ENCODE measurements at regions of chr4 and their contacts with region 1.

Region 1: DNA sequence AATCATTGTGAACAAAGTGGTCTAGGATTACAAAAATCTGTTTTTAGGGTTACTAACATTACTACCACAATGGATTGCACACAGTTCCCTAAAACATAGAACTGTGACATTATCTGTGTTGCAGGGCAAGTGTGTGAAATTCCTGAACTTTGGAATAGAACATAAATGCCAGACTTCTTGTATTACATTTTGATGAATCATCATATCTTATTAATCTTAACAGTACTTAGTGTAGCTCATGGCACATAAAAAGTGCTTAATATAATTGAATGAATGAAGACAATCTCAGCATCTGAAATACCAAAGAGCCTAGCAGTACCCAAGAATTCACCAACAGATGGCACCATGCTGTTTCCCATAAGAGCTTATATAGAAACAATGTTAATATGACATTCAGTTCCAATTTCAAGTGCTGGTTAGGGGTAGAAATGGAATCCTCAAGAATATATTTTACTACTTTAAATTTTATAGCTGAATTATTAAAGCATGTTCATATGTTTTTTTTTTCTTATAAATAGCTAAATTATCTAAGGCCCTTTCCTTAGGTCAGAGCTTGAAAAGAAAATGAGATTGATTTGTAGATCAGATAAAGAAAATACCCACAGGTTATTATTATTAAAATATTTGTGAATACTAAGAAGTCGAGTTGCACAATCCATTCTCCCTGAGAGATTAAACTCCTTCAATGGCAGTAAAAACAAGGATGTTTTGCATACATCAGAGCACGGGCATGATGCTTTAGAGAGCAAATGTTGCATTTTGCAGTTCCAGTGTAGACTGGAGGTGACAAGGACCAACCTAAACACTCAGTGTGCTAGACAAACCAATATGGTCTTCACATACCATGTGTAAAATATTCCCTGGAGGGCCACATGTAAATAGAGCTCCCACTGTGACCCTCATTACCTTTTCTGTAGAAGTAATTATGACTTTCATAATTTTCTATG is 25.7 kb upstream of the SHISA3 start:
- DNase-seq: no peak
- ATAC-seq: no peak
- H3K4me3 Mint-ChIP-seq: no peak overlapping the region
- H3K27ac Mint-ChIP-seq: no peak overlapping the region
- H3K4me1 Mint-ChIP-seq: no peaks in the 10 kb centered on the region
- H3K27me3 Mint-ChIP-seq: peaks cover 6% of the 10 kb centered on the region
- CTCF ChIP-seq: no peak

Region 2: GRCh38 chr4:42282081-42282901 is 89.3 kb before region 1 on chr4:
- CTCF ChIA-PET with region 1: no interaction called
- POLR2A ChIA-PET with region 1: no interaction called
- intact Hi-C with region 1: no loop called
- DNase-seq: no peak
- ATAC-seq: peak; percentile 50
- H3K4me3 Mint-ChIP-seq: peak overlapping the region; percentile 3
- H3K27ac Mint-ChIP-seq: no peak overlapping the region
- H3K4me1 Mint-ChIP-seq: peaks cover 16% of the 10 kb centered on the region
- H3K27me3 Mint-ChIP-seq: peaks cover 15% of the 10 kb centered on the region
- CTCF ChIP-seq: no peak

Region 3: GRCh38 chr4:42519803-42520417 is 148.3 kb after region 1 on chr4:
- CTCF ChIA-PET with region 1: interaction called, 39 read pairs
- POLR2A ChIA-PET with region 1: no interaction called
- intact Hi-C with region 1: loop called (anchors 1 kb)
- DNase-seq: no peak
- ATAC-seq: peak; percentile 42
- H3K4me3 Mint-ChIP-seq: no peak overlapping the region
- H3K27ac Mint-ChIP-seq: no peak overlapping the region
- H3K4me1 Mint-ChIP-seq: peaks cover 6% of the 10 kb centered on the region
- H3K27me3 Mint-ChIP-seq: no peaks in the 10 kb centered on the region
- CTCF ChIP-seq: peak; percentile 59

Region 4: GRCh38 chr4:42605264-42605663 is 233.7 kb after region 1 on chr4:
- CTCF ChIA-PET with region 1: no interaction called
- POLR2A ChIA-PET with region 1: no interaction called
- intact Hi-C with region 1: no loop called
- DNase-seq: no peak
- ATAC-seq: no peak
- H3K4me3 Mint-ChIP-seq: no peak overlapping the region
- H3K27ac Mint-ChIP-seq: no peak overlapping the region
- H3K4me1 Mint-ChIP-seq: peaks cover 5% of the 10 kb centered on the region
- H3K27me3 Mint-ChIP-seq: no peaks in the 10 kb centered on the region
- CTCF ChIP-seq: no peak

Region 5: DNA sequence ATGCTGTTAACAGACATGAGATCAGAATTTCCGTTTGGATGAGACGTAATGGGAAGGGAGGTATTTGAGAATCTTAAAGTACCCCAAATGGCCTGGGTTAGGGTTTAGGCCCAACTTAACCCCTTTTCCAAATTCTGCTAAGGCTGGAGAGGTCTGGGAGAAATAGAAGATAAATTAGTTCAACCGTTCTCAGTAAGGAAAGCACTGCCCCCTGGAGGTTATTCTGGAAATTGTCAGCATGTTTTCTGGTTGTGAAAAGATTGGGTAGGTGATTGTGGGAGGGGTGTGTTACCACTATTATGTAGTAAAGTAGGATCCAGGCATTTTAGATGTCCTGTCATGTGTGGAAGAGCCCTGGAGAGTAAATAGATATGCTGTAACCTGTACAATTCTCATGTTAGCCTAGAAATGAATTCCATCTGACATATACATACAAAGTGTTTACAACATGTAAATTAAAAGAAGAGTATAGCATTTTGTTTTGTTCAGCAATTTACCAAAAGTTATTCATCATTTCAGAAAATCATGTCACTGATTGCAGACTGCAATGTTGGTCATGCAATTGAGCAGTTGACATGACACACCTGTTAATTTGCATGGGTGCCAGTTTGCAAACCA is 494.1 kb after region 1 on chr4:
- CTCF ChIA-PET with region 1: interaction called, 3 read pairs
- POLR2A ChIA-PET with region 1: no interaction called
- intact Hi-C with region 1: loop called (anchors 1 kb)
- DNase-seq: no peak
- ATAC-seq: no peak
- H3K4me3 Mint-ChIP-seq: no peak overlapping the region
- H3K27ac Mint-ChIP-seq: no peak overlapping the region
- H3K4me1 Mint-ChIP-seq: no peaks in the 10 kb centered on the region
- H3K27me3 Mint-ChIP-seq: peaks cover 14% of the 10 kb centered on the region
- CTCF ChIP-seq: peak; percentile 88